Activated CD4-positive, alpha-beta memory T cell treated with anti-CD3 and anti-CD28 coated beads for 36 hours (primary cell): ENCODE measurements at regions of chr2 and their contacts with region 1.

Region 1: GRCh38 chr2:55617175-55618024 is at the start of gene PPP4R3B:
- DNase-seq: peak; percentile 99
- H3K4me3 Mint-ChIP-seq: no peak within 1 kb of the TSS
- H3K27ac Mint-ChIP-seq: no peak within 1 kb of the TSS
- H3K4me1 Mint-ChIP-seq: peaks cover 47% of the 10 kb centered on the region
- H3K27me3 Mint-ChIP-seq: no peaks in the 10 kb centered on the region
- total RNA-seq, gene PPP4R3B: 62.4 to 65.1 TPM

Region 2: DNA sequence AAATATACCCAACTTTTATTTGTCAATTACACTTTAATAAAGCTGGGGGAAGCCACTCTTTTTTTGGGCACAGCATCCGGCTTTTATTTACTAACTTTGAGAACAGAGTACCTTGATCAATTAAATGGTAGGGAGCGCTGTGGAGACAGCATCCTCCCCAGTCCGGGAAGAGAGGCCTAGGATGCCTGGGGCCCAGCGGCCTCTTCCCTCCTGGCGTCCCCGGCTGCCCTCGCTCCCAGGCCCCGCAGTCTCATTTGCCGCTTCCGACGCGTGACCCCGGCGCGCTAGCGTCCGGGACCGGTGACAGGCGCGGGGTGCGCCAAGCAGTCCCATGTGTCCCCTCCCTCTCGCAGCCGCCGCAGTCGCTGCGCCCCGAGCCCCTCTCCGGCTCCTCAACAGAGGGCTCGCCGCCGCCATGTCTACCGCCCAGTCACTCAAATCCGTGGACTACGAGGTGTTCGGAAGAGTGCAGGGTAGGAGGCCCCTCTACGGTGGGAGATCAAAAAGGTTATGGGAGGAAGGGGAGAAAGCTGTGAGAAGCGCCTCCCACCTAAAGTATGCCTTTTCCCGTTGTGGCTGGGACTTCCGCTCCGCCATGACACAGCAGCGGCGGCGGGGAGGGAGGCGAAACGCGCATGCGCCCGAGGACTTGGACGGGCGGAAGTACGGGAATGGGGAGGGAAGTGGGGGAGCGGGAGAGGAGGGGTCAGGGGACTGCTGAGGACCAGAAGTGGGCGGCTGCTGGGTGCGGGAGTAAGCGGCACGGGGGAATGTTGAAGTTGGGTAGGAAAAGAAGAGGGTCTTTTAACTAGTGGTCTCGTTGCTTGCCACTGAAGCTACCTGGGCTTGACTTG is 1501.9 kb before region 1 on chr2 and contains the start of gene ACYP2:
- CTCF ChIA-PET with region 1: no interaction called
- POLR2A ChIA-PET with region 1: no interaction called
- intact Hi-C with region 1: loop called (anchors 2 kb)
- DNase-seq: peak; percentile 95
- H3K4me3 Mint-ChIP-seq: peak within 1 kb of the TSS; percentile 94
- H3K27ac Mint-ChIP-seq: peak within 1 kb of the TSS; percentile 99
- H3K4me1 Mint-ChIP-seq: peaks cover 13% of the 10 kb centered on the region
- H3K27me3 Mint-ChIP-seq: no peaks in the 10 kb centered on the region
- total RNA-seq, gene ACYP2: 5.6 to 6.4 TPM

Region 3: DNA sequence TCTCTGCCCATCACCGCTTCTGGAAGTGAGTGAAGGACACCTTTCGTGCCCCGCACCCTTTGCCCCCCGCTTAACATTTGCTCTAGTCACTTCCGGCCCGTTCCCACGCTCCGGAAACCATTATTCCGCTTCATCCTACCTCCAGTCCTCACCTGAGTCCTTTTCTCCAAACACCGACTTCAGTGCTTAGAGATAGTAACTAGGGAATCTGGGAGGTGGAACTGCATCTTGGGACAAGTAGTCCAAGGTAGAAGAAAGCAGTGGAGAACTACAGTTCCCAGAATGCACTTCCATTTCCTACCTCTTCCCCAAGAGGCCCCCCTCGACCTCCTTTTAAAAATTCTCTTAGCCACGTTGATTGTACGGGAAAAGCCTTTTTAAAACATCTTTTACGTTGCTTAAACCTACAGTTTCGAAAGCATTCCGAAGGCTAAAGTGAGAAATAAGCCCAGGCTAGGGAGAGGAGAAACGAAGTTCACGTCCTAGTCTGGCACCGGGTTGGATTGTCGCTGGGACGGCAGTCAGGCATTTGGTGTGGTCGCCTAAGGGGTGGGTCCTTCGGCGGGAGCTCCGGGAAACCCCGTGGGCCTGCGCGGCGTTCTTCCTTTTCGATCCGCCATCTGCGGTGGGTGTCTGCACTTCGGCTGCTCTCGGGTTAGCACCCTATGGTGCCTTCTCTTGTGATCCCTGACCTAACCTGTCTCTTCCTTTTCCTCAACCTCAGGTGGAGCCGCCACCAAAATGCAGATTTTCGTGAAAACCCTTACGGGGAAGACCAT is 385.1 kb before region 1 on chr2 and contains the starts of genes CLHC1 and RPS27A:
- CTCF ChIA-PET with region 1: no interaction called
- POLR2A ChIA-PET with region 1: interaction called, 4 read pairs
- intact Hi-C with region 1: loop called (anchors 1 kb)
- DNase-seq: peak; percentile 95
- H3K4me3 Mint-ChIP-seq: peak within 1 kb of the TSS; percentile 96
- H3K27ac Mint-ChIP-seq: peak within 1 kb of the TSS; percentile 94
- H3K4me1 Mint-ChIP-seq: peaks cover 60% of the 10 kb centered on the region
- H3K27me3 Mint-ChIP-seq: no peaks in the 10 kb centered on the region
- total RNA-seq, gene CLHC1: 5.5 to 7.5 TPM
- total RNA-seq, gene RPS27A: 1,372 to 1,402 TPM

Region 4: GRCh38 chr2:55419679-55420438 is 197.5 kb before region 1 on chr2 and contains the start of gene CCDC88A:
- CTCF ChIA-PET with region 1: no interaction called
- POLR2A ChIA-PET with region 1: no interaction called
- intact Hi-C with region 1: loop called (anchors 1 kb)
- DNase-seq: peak; percentile 92
- H3K4me3 Mint-ChIP-seq: peak within 1 kb of the TSS; percentile 81
- H3K27ac Mint-ChIP-seq: peak within 1 kb of the TSS; percentile 69
- H3K4me1 Mint-ChIP-seq: peaks cover 23% of the 10 kb centered on the region
- H3K27me3 Mint-ChIP-seq: peaks cover 4% of the 10 kb centered on the region
- total RNA-seq, gene CCDC88A: 13.2 to 14.1 TPM

Region 5: GRCh38 chr2:55581435-55581834 is 36.0 kb before region 1 on chr2:
- CTCF ChIA-PET with region 1: no interaction called
- POLR2A ChIA-PET with region 1: no interaction called
- intact Hi-C with region 1: loop called (anchors 5 kb)
- DNase-seq: no peak
- H3K4me3 Mint-ChIP-seq: no peak overlapping the region
- H3K27ac Mint-ChIP-seq: no peak overlapping the region
- H3K4me1 Mint-ChIP-seq: peaks cover 21% of the 10 kb centered on the region
- H3K27me3 Mint-ChIP-seq: no peaks in the 10 kb centered on the region